Naive thymus-derived CD4-positive, alpha-beta T cell (primary cell): ENCODE measurements at regions of chr17 and their contacts with region 1.

Region 1: DNA sequence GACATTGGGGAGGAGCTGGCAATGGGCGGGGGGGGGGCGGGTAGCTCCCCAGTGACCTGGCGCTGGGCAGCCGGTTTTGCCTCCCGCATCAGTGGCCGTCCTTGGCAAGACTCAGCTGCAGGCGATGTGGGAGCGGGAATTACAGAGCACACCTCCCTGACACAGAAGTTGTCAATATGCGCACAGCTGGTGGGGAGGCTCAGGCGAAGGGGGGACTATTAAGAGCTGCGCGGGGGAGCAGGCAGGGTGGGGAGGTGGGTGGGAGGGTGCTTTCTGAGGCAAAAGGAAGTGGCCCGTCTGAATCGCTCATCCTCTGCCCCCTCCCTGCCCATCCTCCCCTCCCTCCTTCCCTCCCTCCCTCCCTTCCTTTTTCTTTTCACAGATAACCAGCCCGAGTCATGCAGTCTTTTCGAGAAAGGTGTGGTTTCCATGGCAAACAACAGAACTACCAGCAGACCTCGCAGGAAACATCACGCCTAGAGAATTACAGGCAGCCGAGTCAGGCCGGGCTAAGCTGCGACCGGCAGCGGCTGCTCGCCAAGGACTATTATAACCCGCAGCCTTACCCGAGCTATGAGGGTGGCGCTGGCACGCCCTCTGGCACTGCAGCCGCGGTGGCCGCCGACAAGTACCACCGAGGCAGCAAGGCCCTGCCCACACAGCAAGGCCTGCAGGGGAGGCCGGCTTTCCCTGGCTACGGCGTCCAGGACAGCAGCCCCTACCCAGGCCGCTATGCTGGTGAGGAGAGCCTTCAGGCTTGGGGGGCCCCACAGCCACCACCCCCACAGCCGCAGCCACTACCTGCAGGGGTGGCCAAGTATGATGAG is 44.0 kb downstream of the SREBF1 start:
- DNase-seq: peak in 8 of 9 donors; percentile 42 to 81 (median 72)
- ATAC-seq: peak; percentile 86
- H3K4me3 ChIP-seq: peak overlapping the region; percentile 35
- H3K4me3 Mint-ChIP-seq: peak overlapping the region; percentile 58 to 79 (median 70)
- H3K27ac ChIP-seq: peak overlapping the region; percentile 67
- H3K27ac Mint-ChIP-seq: peak overlapping the region; percentile 85 to 95 (median 88)
- H3K4me1 ChIP-seq: peaks cover 8 to 19% of the 10 kb centered on the region in 2 donors
- H3K4me1 Mint-ChIP-seq: peaks cover 20 to 38% (median 29%) of the 10 kb centered on the region in 7 donors
- H3K27me3 ChIP-seq: no peaks in the 10 kb centered on the region
- H3K27me3 Mint-ChIP-seq: no peaks in the 10 kb centered on the region

Region 2: DNA sequence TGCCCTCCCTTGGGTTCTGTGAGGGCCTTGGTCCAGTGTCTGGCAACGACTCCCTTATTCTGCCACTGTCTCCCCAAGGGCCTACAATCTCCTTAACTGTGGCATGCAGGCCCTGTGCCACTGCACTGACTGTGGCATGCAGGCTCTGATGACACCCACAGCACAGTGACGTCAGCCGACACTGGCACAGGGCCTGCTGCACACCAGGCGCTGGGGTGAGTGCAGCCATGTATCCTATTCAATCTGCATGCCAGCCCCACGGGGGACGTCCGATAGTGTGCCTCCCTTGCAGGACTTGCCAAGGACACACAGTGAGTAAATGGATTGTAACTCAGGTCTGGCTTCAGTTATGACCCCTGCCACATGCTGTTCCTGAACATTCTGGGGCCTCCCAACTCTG is 256.8 kb before region 1 on chr17:
- CTCF ChIA-PET with region 1: no interaction called
- POLR2A ChIA-PET with region 1: no interaction called
- intact Hi-C with region 1: no loop called
- DNase-seq: no peak
- ATAC-seq: no peak
- H3K4me3 ChIP-seq: no peak overlapping the region
- H3K4me3 Mint-ChIP-seq: no peak overlapping the region
- H3K27ac ChIP-seq: no peak overlapping the region
- H3K27ac Mint-ChIP-seq: no peak overlapping the region
- H3K4me1 ChIP-seq: no peaks in the 10 kb centered on the region
- H3K4me1 Mint-ChIP-seq: peaks cover 0 to 3% (median 0%) of the 10 kb centered on the region in 7 donors
- H3K27me3 ChIP-seq: no peaks in the 10 kb centered on the region
- H3K27me3 Mint-ChIP-seq: peaks cover 0 to 3% (median 0%) of the 10 kb centered on the region in 5 donors

Region 3: DNA sequence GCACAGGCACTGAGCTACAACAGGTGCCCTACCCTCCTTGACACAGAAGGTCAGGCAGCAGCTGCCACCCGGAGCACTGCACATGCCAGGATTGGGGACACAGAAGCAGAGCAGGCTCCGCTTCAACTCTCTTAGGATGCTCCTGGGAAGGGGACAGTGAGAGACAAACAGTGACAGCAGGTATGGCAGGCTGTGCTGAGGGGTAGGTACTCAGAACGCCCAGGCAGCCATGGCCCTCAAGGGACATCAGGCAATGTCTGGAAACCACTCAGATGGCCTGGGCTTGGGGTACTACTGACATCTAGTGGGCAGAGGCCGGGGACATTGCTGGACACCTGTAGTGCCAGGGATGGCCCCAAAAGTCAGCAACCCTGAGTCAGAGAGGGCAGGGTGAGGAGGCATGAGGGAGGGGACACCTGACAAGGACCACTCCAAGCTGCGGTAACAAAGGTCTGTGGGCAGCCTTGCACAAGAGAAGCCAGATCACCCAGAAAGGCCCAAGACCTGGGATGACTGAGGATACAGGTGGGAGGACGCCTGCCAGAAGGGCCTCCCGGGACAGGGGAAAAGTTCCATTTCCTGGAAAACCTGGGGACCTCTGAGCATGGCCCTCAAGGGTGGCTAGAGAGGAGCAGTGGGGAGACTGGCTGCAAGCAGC is 222.5 kb before region 1 on chr17:
- CTCF ChIA-PET with region 1: no interaction called
- POLR2A ChIA-PET with region 1: no interaction called
- intact Hi-C with region 1: no loop called
- DNase-seq: no peak
- ATAC-seq: no peak
- H3K4me3 ChIP-seq: no peak overlapping the region
- H3K4me3 Mint-ChIP-seq: no peak overlapping the region
- H3K27ac ChIP-seq: no peak overlapping the region
- H3K27ac Mint-ChIP-seq: no peak overlapping the region
- H3K4me1 ChIP-seq: no peaks in the 10 kb centered on the region
- H3K4me1 Mint-ChIP-seq: peaks cover 0 to 7% (median 0%) of the 10 kb centered on the region in 7 donors
- H3K27me3 ChIP-seq: no peaks in the 10 kb centered on the region
- H3K27me3 Mint-ChIP-seq: no peaks in the 10 kb centered on the region

Region 4: GRCh38 chr17:17729620-17730249 is 63.0 kb before region 1 on chr17:
- CTCF ChIA-PET with region 1: interaction called, 4 read pairs
- POLR2A ChIA-PET with region 1: no interaction called
- intact Hi-C with region 1: loop called in 1 of 2 experiments (anchors 1 kb)
- DNase-seq: peak in 8 of 9 donors; percentile 39 to 74 (median 63)
- ATAC-seq: peak; percentile 87
- H3K4me3 ChIP-seq: no peak overlapping the region
- H3K4me3 Mint-ChIP-seq: peak overlapping the region in 1 of 10 donors; percentile 8
- H3K27ac ChIP-seq: no peak overlapping the region
- H3K27ac Mint-ChIP-seq: peak overlapping the region in 7 of 9 donors; percentile 35 to 92 (median 68)
- H3K4me1 ChIP-seq: peaks cover 0 to 15% of the 10 kb centered on the region in 2 donors
- H3K4me1 Mint-ChIP-seq: peaks cover 11 to 40% (median 35%) of the 10 kb centered on the region in 7 donors
- H3K27me3 ChIP-seq: no peaks in the 10 kb centered on the region
- H3K27me3 Mint-ChIP-seq: peaks cover 0 to 5% (median 0%) of the 10 kb centered on the region in 5 donors

Region 5: DNA sequence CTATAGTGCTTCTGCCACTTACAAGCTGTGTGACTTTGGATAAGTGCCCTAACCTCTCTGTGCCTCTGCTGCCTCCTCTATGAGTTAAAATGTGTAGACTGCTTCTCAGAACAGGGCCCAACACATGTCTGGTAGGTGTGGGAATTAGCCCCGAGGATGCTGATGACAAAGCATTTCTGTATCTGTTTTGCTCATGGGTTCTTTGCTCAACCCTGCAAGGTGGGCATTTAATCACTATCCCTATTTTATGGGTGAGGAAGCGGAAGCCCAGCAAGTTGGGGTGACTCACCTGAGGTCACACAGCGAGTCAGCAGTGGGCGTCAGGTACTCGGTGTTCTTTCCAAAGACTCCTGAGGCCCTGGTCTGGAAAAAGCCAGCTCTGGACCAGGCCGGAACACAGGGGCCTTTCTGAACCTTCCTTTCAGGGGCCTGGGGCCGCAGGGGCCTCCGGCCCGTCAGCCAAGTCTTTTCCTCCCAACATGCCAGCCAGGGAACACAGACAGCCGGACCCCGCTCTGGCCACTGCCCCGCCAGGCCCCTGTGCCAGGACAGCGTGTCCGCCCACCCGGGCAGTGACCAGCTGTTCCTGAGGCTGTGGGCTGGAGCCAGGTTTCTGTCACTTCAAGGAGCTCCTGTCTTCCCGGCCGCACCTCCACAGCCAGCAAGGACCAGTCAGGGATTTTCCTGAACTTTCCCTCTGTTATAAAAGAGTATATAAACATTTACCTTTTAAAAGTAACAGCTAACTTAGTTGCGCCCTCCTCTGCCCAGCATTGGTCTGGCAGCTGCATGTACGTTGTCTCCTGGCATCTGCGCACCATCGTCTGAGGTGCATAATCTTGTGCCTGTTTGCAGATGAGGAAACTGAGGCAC is 18.5 kb before region 1 on chr17:
- CTCF ChIA-PET with region 1: no interaction called
- POLR2A ChIA-PET with region 1: interaction called, 3 read pairs
- intact Hi-C with region 1: loop called in 1 of 2 experiments (anchors 2 kb)
- DNase-seq: no peak
- ATAC-seq: no peak
- H3K4me3 ChIP-seq: no peak overlapping the region
- H3K4me3 Mint-ChIP-seq: no peak overlapping the region
- H3K27ac ChIP-seq: no peak overlapping the region
- H3K27ac Mint-ChIP-seq: peak overlapping the region in 4 of 9 donors; percentile 43 to 68 (median 61)
- H3K4me1 ChIP-seq: no peaks in the 10 kb centered on the region
- H3K4me1 Mint-ChIP-seq: peaks cover 0 to 12% (median 10%) of the 10 kb centered on the region in 7 donors
- H3K27me3 ChIP-seq: no peaks in the 10 kb centered on the region
- H3K27me3 Mint-ChIP-seq: no peaks in the 10 kb centered on the region

Region 6: DNA sequence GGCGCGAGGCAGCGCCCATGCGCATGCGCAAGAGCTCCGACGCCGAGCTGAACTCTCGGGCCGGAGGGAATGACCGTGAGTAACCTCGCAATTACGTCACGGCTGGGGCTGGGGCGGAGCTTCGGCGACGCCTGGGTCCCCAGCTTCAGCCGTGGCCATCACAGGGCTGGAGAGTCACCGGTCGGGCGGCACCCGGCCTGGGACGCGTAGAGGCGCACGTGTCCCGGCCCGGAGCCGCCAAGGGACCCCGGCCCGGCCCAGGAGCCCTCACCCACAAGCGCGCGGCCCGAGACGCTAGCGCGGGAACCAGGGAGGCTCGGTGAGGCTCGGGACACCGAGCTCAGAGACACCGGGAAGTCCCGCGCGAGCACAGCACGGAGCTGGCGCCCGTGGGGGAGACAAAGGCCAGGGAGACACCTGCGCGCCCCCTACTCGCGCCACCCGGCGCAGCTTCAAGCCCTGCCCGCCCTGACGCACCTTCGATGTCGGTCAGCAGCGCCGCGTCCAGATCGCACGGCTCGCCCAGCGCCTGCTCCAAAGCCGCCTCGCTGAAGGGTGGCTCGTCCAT is 43.6 kb after region 1 on chr17:
- CTCF ChIA-PET with region 1: no interaction called
- POLR2A ChIA-PET with region 1: interaction called, 5 read pairs
- intact Hi-C with region 1: loop called in 1 of 2 experiments (anchors 2 kb)
- DNase-seq: peak; percentile 93 to 99 (median 97)
- ATAC-seq: peak; percentile 85
- H3K4me3 ChIP-seq: peak overlapping the region; percentile 86
- H3K4me3 Mint-ChIP-seq: peak overlapping the region; percentile 85 to 95 (median 90)
- H3K27ac ChIP-seq: peak overlapping the region; percentile 99
- H3K27ac Mint-ChIP-seq: peak overlapping the region; percentile 94 to 99 (median 98)
- H3K4me1 ChIP-seq: peaks cover 18 to 60% of the 10 kb centered on the region in 2 donors
- H3K4me1 Mint-ChIP-seq: peaks cover 46 to 79% (median 75%) of the 10 kb centered on the region in 7 donors
- H3K27me3 ChIP-seq: no peaks in the 10 kb centered on the region
- H3K27me3 Mint-ChIP-seq: no peaks in the 10 kb centered on the region

Region 7: DNA sequence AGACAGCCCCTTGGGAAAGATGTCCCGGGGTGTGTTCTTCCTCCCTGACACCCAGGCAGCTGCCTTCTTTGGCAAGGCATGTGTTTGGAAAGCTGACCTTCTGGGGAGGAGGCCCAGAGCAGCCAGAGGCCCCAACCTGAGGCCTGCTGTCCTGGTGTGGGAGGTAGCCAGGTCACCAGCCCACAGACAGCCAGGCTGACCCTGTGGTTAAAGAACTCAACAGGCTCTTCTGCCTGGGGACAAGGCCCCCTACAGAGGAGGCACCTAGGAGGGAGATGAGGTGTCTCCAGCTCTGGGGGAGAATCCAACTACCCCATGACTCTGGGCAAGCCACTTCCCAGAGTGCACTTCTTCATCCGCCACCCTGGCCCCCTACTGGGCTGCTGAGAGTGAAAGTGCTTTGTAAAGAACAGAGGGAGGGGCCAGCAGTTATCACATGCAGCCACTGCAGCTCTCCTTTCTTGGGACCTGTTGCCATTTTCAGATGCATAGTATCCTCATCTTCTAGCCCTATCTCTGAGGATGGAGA is 57.1 kb after region 1 on chr17:
- CTCF ChIA-PET with region 1: no interaction called
- POLR2A ChIA-PET with region 1: no interaction called
- intact Hi-C with region 1: loop called in 1 of 2 experiments (anchors 2 kb)
- DNase-seq: peak; percentile 33 to 74 (median 69)
- ATAC-seq: peak; percentile 78
- H3K4me3 ChIP-seq: peak overlapping the region; percentile 17
- H3K4me3 Mint-ChIP-seq: peak overlapping the region; percentile 70 to 81 (median 76)
- H3K27ac ChIP-seq: peak overlapping the region; percentile 70
- H3K27ac Mint-ChIP-seq: peak overlapping the region; percentile 95 to 98 (median 96)
- H3K4me1 ChIP-seq: peaks cover 35 to 61% of the 10 kb centered on the region in 2 donors
- H3K4me1 Mint-ChIP-seq: peaks cover 45 to 82% (median 73%) of the 10 kb centered on the region in 7 donors
- H3K27me3 ChIP-seq: no peaks in the 10 kb centered on the region
- H3K27me3 Mint-ChIP-seq: no peaks in the 10 kb centered on the region

Region 8: DNA sequence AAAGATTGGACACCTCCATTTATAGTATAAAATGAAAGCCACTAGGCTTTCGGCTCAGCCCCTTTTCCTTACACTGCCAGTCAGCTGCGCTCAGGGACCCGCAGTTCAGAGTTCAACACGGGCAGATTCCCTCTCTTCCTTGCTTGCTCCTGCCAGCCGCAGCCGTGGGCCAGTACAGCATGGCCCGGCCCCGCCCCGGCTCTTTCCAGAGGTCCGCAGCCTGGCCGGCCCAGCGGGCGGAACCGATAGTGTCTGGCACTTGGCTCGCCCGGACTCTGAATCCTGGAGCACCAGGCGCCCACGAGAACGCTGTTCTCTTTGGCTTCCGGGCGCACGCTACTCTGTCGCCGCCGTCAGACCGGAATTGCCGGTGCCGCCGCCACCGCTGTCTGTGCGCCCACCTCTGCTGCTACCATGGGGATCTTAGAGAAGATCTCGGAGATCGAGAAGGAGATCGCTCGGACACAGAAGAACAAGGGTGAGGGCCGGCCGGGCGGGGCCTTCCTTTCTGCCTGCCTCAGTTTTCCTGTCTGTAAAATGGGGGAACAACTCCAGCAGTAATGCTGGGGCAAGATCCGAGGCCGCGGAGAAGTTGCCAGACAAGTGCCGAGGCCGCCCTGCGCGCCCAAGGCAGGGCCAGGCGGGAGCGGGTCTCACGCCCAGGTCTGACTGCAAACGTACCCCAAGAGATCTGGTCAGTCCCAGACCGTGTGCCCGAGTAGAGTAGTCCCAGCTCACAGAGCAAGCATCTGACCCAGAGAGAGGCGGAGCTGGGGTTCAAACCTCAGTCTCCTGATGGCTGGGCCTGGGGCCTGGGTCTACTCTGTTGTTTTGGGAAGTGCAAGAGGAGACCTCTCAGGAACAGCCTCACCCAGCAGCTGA is 295.1 kb after region 1 on chr17 and contains the start of gene DRG2:
- CTCF ChIA-PET with region 1: no interaction called
- POLR2A ChIA-PET with region 1: no interaction called
- intact Hi-C with region 1: loop called in 1 of 2 experiments (anchors 5 kb)
- DNase-seq: peak; percentile 79 to 94 (median 85)
- ATAC-seq: peak; percentile 98
- H3K4me3 ChIP-seq: peak within 1 kb of the TSS; percentile 84
- H3K4me3 Mint-ChIP-seq: peak within 1 kb of the TSS; percentile 97 to 100 (median 98)
- H3K27ac ChIP-seq: peak within 1 kb of the TSS; percentile 85
- H3K27ac Mint-ChIP-seq: peak within 1 kb of the TSS; percentile 96 to 99 (median 98)
- H3K4me1 ChIP-seq: peaks cover 9 to 12% of the 10 kb centered on the region in 2 donors
- H3K4me1 Mint-ChIP-seq: peaks cover 19 to 35% (median 27%) of the 10 kb centered on the region in 7 donors
- H3K27me3 ChIP-seq: no peaks in the 10 kb centered on the region
- H3K27me3 Mint-ChIP-seq: no peaks in the 10 kb centered on the region
- total RNA-seq, gene DRG2: 39.6 to 54.7 (median 48.8) TPM

Region 9: DNA sequence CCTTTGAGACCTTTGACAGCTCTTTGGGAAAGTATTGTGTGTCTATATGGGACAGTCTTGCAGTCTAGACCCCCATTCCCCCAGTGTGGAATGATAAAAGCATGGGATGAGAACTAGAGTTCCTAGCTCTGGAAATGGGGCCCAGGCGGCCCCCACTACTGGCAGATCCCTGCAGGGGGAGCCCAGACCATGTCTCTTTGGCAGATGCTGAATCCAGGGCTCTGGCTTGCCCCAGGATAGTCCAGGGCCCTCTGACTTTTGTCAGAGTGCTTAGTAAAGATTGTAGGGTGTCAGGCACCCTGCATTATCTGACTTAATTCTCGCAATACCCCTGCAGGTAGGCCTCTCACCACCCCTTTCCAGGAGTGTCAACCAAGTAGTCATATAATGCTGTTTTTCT is 399.2 kb after region 1 on chr17:
- CTCF ChIA-PET with region 1: no interaction called
- POLR2A ChIA-PET with region 1: no interaction called
- intact Hi-C with region 1: no loop called
- DNase-seq: no peak
- ATAC-seq: no peak
- H3K4me3 ChIP-seq: no peak overlapping the region
- H3K4me3 Mint-ChIP-seq: peak overlapping the region in 6 of 10 donors; percentile 27 to 83 (median 63)
- H3K27ac ChIP-seq: no peak overlapping the region
- H3K27ac Mint-ChIP-seq: peak overlapping the region in 3 of 9 donors; percentile 14 to 84 (median 20)
- H3K4me1 ChIP-seq: peaks cover 33 to 50% of the 10 kb centered on the region in 2 donors
- H3K4me1 Mint-ChIP-seq: peaks cover 60 to 89% (median 83%) of the 10 kb centered on the region in 7 donors
- H3K27me3 ChIP-seq: no peaks in the 10 kb centered on the region
- H3K27me3 Mint-ChIP-seq: no peaks in the 10 kb centered on the region